CD4-positive, alpha-beta memory T cell (primary cell): ENCODE measurements at regions of chr2 and their contacts with region 1.

Region 1: GRCh38 chr2:36355151-36355889 is at the start of gene CRIM1:
- DNase-seq: peak; percentile 28 to 50 (median 38)
- H3K4me3 ChIP-seq: peak within 1 kb of the TSS in 1 of 2 donors; percentile 36
- H3K4me3 Mint-ChIP-seq: peak within 1 kb of the TSS; percentile 80 to 89 (median 85)
- H3K27ac ChIP-seq: no peak within 1 kb of the TSS
- H3K27ac Mint-ChIP-seq: peak within 1 kb of the TSS in 3 of 7 donors; percentile 1 to 25 (median 20)
- H3K4me1 ChIP-seq: peaks cover 28% of the 10 kb centered on the region
- H3K4me1 Mint-ChIP-seq: peaks cover 24 to 46% (median 33%) of the 10 kb centered on the region in 4 donors
- H3K27me3 ChIP-seq: peaks cover 5% of the 10 kb centered on the region
- H3K27me3 Mint-ChIP-seq: peaks cover 13 to 14% of the 10 kb centered on the region in 2 donors
- total RNA-seq, gene CRIM1: 6.8 to 12.0 TPM

Region 2: DNA sequence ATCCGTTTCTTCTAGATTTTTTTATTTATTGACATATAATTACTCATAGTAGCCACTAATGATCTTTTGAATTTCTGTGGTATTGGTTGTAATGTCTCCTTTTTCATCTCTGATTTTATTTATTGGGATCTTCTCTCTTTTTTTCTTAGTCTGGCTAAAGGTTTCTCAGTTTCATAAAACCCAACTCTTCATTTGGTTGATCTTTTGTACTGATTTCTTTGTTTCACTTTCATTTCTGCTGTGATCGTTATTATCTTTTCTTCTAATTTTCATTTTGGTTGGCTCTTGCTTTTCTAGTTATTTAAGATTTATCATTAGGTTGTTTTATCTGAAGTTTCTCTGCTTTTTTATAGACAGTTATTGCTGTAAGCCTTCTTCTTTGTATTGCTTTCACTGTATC is 463.4 kb before region 1 on chr2:
- CTCF ChIA-PET with region 1: no interaction called
- POLR2A ChIA-PET with region 1: no interaction called
- intact Hi-C with region 1: loop called (anchors 10 kb)
- DNase-seq: peak in 1 of 5 donors; percentile 3
- H3K4me3 ChIP-seq: peak overlapping the region in 1 of 2 donors; percentile 3
- H3K4me3 Mint-ChIP-seq: peak overlapping the region; percentile 78 to 94 (median 88)
- H3K27ac ChIP-seq: no peak overlapping the region
- H3K27ac Mint-ChIP-seq: peak overlapping the region in 5 of 7 donors; percentile 11 to 91 (median 83)
- H3K4me1 ChIP-seq: peaks cover 14% of the 10 kb centered on the region
- H3K4me1 Mint-ChIP-seq: peaks cover 11 to 20% (median 15%) of the 10 kb centered on the region in 4 donors
- H3K27me3 ChIP-seq: no peaks in the 10 kb centered on the region
- H3K27me3 Mint-ChIP-seq: no peaks in the 10 kb centered on the region

Region 3: DNA sequence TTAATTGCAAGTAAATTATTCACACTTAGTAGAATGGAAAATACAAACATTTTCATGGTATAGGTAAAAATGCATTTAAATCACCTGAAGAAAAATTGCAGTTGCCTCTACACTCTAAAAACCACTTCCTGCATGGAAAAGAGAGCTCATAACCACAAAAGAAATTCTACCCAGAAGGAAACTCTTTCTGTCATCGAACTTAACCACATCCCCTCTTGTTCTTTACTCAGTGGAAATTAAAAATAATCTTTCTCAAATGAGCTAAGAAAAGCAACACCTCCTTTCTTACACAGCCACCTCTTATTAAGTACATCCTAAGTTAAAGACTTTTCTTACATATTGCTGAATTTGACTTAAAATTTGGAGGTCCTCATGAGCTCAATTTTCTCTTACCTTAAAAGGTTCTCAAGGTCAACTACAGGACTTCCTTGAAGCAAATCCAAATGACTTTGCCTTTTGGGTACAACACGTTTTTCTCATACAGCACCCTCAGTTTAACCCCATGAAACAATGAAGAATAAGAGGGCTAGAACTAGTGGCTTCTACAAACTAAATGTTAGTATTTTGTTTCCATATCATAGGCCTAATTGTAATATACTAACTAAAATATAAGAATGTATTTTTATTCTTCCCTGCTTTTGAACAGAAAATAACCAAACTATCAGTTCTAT is 108.9 kb before region 1 on chr2:
- CTCF ChIA-PET with region 1: interaction called, 3 read pairs
- POLR2A ChIA-PET with region 1: no interaction called
- intact Hi-C with region 1: loop called (anchors 1 kb)
- DNase-seq: peak in 4 of 5 donors; percentile 74 to 81 (median 78)
- H3K4me3 ChIP-seq: no peak overlapping the region
- H3K4me3 Mint-ChIP-seq: peak overlapping the region in 7 of 8 donors; percentile 45 to 87 (median 74)
- H3K27ac ChIP-seq: no peak overlapping the region
- H3K27ac Mint-ChIP-seq: peak overlapping the region in 6 of 7 donors; percentile 68 to 92 (median 85)
- H3K4me1 ChIP-seq: peaks cover 61% of the 10 kb centered on the region
- H3K4me1 Mint-ChIP-seq: peaks cover 48 to 71% (median 59%) of the 10 kb centered on the region in 4 donors
- H3K27me3 ChIP-seq: no peaks in the 10 kb centered on the region
- H3K27me3 Mint-ChIP-seq: no peaks in the 10 kb centered on the region

Region 4: DNA sequence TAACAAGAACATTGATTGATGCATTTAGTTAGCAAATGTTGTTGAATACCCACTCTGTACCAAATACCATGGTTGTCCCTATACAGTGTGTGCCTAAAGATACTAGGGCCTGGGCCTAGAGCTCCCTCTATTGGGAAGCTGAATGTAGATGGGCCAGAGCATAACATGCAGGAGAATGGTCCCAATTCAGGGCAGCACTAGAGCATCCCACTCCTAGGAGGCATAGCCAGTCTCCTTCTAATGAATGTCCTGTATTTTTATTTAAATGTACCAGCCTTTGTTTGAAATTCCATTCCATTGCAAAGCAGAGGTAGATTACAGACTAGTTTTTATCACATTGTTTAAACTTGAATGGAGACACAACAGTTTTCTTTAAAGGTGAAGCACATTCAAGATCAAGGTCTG is 152.1 kb after region 1 on chr2:
- CTCF ChIA-PET with region 1: interaction called, 3 read pairs
- POLR2A ChIA-PET with region 1: no interaction called
- intact Hi-C with region 1: loop called (anchors 1 kb)
- DNase-seq: peak in 3 of 5 donors; percentile 9 to 24 (median 17)
- H3K4me3 ChIP-seq: no peak overlapping the region
- H3K4me3 Mint-ChIP-seq: no peak overlapping the region
- H3K27ac ChIP-seq: no peak overlapping the region
- H3K27ac Mint-ChIP-seq: no peak overlapping the region
- H3K4me1 ChIP-seq: no peaks in the 10 kb centered on the region
- H3K4me1 Mint-ChIP-seq: no peaks in the 10 kb centered on the region
- H3K27me3 ChIP-seq: no peaks in the 10 kb centered on the region
- H3K27me3 Mint-ChIP-seq: no peaks in the 10 kb centered on the region

Region 5: GRCh38 chr2:36770542-36771287 is 415.4 kb after region 1 on chr2:
- CTCF ChIA-PET with region 1: no interaction called
- POLR2A ChIA-PET with region 1: no interaction called
- intact Hi-C with region 1: loop called (anchors 5 kb)
- DNase-seq: peak in 2 of 5 donors; percentile 6 to 12
- H3K4me3 ChIP-seq: no peak overlapping the region
- H3K4me3 Mint-ChIP-seq: no peak overlapping the region
- H3K27ac ChIP-seq: no peak overlapping the region
- H3K27ac Mint-ChIP-seq: no peak overlapping the region
- H3K4me1 ChIP-seq: no peaks in the 10 kb centered on the region
- H3K4me1 Mint-ChIP-seq: no peaks in the 10 kb centered on the region
- H3K27me3 ChIP-seq: no peaks in the 10 kb centered on the region
- H3K27me3 Mint-ChIP-seq: peaks cover 4 to 8% of the 10 kb centered on the region in 2 donors

Region 6: GRCh38 chr2:36966370-36967235 is 611.3 kb after region 1 on chr2 and contains the start of gene STRN:
- CTCF ChIA-PET with region 1: no interaction called
- POLR2A ChIA-PET with region 1: no interaction called
- intact Hi-C with region 1: loop called (anchors 2 kb)
- DNase-seq: peak; percentile 97 to 100 (median 99)
- H3K4me3 ChIP-seq: peak within 1 kb of the TSS; percentile 88 to 89
- H3K4me3 Mint-ChIP-seq: peak within 1 kb of the TSS; percentile 96 to 99 (median 98)
- H3K27ac ChIP-seq: peak within 1 kb of the TSS; percentile 84
- H3K27ac Mint-ChIP-seq: peak within 1 kb of the TSS; percentile 97 to 99 (median 99)
- H3K4me1 ChIP-seq: peaks cover 43% of the 10 kb centered on the region
- H3K4me1 Mint-ChIP-seq: peaks cover 34 to 59% (median 44%) of the 10 kb centered on the region in 4 donors
- H3K27me3 ChIP-seq: no peaks in the 10 kb centered on the region
- H3K27me3 Mint-ChIP-seq: peaks cover 0 to 4% of the 10 kb centered on the region in 2 donors
- total RNA-seq, gene STRN: 29.0 to 33.4 TPM